Activated T-helper 1 cell treated with anti-CD3 and anti-CD28 coated beads, Interleukin-12 subunit alpha, Interleukin-12 subunit beta, Interleukin-2, Interleukin-4 antibody, amounts not matched to agents 30 ng/mL and 10 ng/mL and 1 ng/mL, durations not matched to agents 14 hours and 24 hours and 36 hours (primary cell): ENCODE measurements at regions of chr6 and their contacts with region 1.

Region 1: GRCh38 chr6:143842902-143843676 is at the start of gene LTV1:
- DNase-seq: peak; percentile 88
- H3K4me3 Mint-ChIP-seq: peak within 1 kb of the TSS; percentile 95
- H3K27ac Mint-ChIP-seq: peak within 1 kb of the TSS; percentile 95
- H3K4me1 Mint-ChIP-seq: peaks cover 29% of the 10 kb centered on the region
- H3K27me3 Mint-ChIP-seq: no peaks in the 10 kb centered on the region
- total RNA-seq, gene LTV1: 63.0 and 67.9 TPM in 2 replicates

Region 2: GRCh38 chr6:143450453-143451371 is 392.4 kb before region 1 on chr6 and contains the starts of genes ADAT2 and PEX3:
- intact Hi-C with region 1: loop called (anchors 2 kb)
- DNase-seq: peak; percentile 92
- H3K4me3 Mint-ChIP-seq: peak within 1 kb of the TSS; percentile 98
- H3K27ac Mint-ChIP-seq: peak within 1 kb of the TSS; percentile 99
- H3K4me1 Mint-ChIP-seq: peaks cover 50% of the 10 kb centered on the region
- H3K27me3 Mint-ChIP-seq: no peaks in the 10 kb centered on the region
- total RNA-seq, gene ADAT2: 39.0 and 43.6 TPM in 2 replicates
- total RNA-seq, gene PEX3: 23.6 and 25.0 TPM in 2 replicates

Region 3: DNA sequence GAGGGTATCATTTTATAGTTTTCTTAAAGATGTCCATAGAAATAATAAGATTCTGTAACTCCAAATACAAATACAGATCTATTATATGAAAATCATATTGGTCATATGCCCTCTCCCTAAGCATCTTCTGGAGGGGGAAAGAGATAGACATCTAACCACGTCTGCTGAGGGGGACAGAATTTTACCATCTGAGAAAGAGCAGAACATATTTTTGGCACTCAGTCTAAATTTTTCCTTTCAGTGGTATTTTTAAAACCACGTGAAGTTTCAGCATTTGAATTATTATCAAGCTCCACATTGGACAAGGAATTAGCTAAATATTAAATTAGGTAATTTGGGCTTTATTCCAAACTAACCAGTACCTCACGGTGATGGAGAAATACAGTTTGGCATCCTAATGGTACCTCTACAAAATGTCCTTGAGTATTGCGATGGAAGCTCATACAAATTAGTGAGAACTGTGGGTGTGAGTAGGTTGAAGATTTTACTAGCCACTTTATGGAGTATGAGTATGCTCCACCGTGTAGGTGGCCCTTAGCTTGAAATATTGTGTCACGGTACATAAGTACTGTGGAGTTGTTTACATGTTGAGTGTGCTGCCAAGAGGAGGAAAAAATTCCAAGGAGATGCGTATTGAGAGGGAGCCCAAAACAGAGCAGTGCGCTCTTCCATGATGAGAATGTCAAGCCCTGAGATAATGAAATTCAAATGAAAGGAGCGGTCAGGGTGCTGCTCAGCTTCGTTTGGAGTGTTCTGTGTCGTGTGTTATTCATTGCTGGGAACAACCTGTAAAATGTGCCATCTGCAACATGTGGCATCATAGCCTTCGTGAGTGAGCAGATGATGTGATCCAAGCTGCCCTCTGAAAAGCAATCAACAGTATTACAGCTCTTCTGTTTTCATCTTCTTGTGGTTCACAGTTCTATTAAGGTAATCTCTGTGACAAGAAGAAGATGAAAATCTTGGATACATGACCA is 213.7 kb before region 1 on chr6:
- intact Hi-C with region 1: loop called (anchors 5 kb)
- DNase-seq: no peak
- H3K4me3 Mint-ChIP-seq: peak overlapping the region; percentile 34
- H3K27ac Mint-ChIP-seq: peak overlapping the region; percentile 76
- H3K4me1 Mint-ChIP-seq: peaks cover 45% of the 10 kb centered on the region
- H3K27me3 Mint-ChIP-seq: no peaks in the 10 kb centered on the region

Region 4: GRCh38 chr6:143857651-143858050 is 14.6 kb after region 1 on chr6:
- intact Hi-C with region 1: loop called (anchors 2 kb)
- DNase-seq: no peak
- H3K4me3 Mint-ChIP-seq: peak overlapping the region; percentile 16
- H3K27ac Mint-ChIP-seq: peak overlapping the region; percentile 59
- H3K4me1 Mint-ChIP-seq: peaks cover 33% of the 10 kb centered on the region
- H3K27me3 Mint-ChIP-seq: no peaks in the 10 kb centered on the region

Region 5: DNA sequence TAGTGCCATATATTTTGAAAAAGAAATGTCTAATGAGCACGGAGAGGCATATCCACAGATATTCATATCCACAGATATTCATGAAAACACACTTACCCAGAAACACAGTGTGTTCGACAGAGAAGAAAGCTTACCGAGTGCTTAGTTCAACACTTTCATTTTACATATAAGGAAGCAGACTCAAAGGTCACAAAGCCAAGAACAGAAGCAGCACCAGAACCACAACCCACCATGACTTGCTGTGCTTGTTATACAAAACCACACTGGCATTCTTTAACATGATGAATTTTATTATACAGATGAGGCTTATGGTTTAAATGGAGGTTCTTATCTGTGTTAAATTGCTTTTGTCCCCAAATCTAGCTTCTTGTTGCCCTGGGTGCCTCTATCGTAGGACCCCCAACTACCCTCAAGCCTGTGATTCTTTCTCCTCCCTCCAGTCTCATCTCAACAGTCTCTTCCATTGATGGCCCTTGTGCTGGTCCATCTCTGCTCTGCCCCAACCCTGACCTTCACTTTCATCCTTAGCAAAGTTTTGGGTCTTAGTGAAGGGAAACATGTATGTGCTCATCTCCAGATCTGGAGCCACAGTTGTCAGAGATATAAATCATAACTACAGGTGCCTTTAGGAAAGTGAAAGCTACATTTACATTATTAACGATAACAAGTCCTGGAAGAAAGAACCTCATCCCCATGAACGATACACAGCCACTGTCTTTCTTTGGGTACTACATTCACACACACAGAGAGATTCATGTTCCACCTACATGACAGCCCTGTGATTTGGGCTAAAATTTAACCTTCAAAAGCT is 212.2 kb after region 1 on chr6:
- intact Hi-C with region 1: loop called (anchors 2 kb)
- DNase-seq: peak; percentile 37
- H3K4me3 Mint-ChIP-seq: peak overlapping the region; percentile 83
- H3K27ac Mint-ChIP-seq: peak overlapping the region; percentile 98
- H3K4me1 Mint-ChIP-seq: peaks cover 48% of the 10 kb centered on the region
- H3K27me3 Mint-ChIP-seq: no peaks in the 10 kb centered on the region

Region 6: DNA sequence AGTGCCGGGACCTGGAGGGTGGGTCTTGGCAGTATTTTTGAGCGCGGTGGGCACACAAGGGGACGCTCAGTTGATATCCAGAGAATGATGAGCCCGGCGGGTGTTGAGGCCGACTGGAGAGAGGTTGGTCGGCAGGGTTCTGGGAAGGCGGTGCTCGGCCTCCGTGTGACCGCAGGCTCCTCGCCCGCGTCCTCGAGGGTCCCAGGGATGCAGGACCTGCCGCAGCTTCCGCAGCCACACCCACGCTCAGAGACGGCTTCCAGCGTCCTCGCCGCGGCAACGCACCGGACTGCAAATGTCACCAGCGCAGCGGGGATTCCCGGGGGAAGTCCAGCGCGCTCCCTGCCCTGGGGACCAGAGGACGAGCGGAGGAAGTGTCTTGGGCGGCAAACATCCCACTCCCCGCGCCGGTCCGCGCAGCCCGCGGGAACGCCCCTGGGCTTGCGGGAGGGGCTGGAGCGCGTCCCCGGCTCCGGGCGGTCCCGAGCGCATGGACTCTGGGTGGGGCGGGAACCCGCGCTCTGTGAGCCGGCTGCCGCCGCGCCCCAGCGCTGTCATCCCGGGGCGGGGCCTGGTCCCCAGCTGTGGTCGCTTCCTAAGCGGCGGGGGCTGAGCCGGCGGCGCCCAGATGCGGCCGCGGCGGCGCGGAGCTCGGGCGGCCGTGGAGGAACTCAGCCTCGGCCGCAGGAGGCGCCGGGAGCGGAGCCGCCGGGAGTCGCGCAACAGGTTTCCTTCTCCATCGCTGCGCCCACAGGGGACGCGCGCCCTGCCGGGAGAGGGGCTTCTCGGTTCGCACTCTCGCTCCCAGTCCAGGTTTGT is 307.0 kb after region 1 on chr6 and contains the start of gene STX11:
- intact Hi-C with region 1: loop called (anchors 10 kb)
- DNase-seq: peak; percentile 78
- H3K4me3 Mint-ChIP-seq: peak within 1 kb of the TSS; percentile 91
- H3K27ac Mint-ChIP-seq: peak within 1 kb of the TSS; percentile 98
- H3K4me1 Mint-ChIP-seq: peaks cover 63% of the 10 kb centered on the region
- H3K27me3 Mint-ChIP-seq: peaks cover 1% of the 10 kb centered on the region
- total RNA-seq, gene STX11: 24.2 and 24.7 TPM in 2 replicates